MCF 10A (cell line): ENCODE measurements at regions of chr1 and their contacts with region 1.

Region 1: GRCh38 chr1:182855911-182856310 is 16.8 kb downstream of the DHX9 start:
- DNase-seq: no peak
- H3K4me3 Mint-ChIP-seq: no peak overlapping the region
- H3K27ac Mint-ChIP-seq: no peak overlapping the region
- H3K4me1 Mint-ChIP-seq: no peaks in the 10 kb centered on the region
- H3K27me3 Mint-ChIP-seq: no peaks in the 10 kb centered on the region
- CTCF ChIP-seq: no peak

Region 2: DNA sequence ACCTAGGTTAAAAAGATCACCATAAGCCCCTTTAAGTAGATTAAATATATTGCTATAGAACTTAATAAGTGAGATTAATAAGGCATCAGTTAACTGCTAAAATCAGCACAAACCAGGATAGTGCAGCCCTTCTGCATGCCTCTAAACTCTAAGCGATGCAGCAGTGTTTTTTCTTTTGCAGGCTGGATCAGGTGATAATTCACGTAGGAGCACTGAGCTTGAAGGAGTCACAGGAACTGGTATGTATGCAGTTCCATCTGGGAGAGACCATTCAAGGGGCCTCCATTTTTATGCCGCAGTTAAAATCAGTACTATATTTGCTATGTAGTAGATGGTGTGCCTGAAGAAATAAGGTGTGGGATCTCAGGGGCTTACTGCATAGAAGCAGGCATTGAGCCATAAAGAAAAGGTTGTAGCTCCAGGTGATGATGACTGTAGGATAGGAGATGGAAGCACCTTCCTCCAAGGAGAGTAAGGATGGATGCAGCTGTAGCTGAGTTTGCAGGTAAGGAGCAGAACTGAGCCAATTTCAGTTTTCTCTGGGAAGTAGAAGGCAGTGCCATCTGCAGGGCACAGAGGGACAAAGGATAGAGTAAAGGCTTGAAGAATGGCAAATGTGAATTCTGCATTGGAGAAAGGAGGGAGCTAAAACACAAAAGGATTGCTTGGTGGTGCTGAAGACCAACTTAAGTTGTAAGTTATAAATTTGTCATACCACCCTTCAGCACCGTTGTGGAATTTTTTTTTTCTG is 43.8 kb before region 1 on chr1:
- CTCF ChIA-PET with region 1: no interaction called
- POLR2A ChIA-PET with region 1: no interaction called
- intact Hi-C with region 1: no loop called
- DNase-seq: peak; percentile 19
- H3K4me3 Mint-ChIP-seq: no peak overlapping the region
- H3K27ac Mint-ChIP-seq: no peak overlapping the region
- H3K4me1 Mint-ChIP-seq: peaks cover 6% of the 10 kb centered on the region
- H3K27me3 Mint-ChIP-seq: no peaks in the 10 kb centered on the region
- CTCF ChIP-seq: no peak

Region 3: DNA sequence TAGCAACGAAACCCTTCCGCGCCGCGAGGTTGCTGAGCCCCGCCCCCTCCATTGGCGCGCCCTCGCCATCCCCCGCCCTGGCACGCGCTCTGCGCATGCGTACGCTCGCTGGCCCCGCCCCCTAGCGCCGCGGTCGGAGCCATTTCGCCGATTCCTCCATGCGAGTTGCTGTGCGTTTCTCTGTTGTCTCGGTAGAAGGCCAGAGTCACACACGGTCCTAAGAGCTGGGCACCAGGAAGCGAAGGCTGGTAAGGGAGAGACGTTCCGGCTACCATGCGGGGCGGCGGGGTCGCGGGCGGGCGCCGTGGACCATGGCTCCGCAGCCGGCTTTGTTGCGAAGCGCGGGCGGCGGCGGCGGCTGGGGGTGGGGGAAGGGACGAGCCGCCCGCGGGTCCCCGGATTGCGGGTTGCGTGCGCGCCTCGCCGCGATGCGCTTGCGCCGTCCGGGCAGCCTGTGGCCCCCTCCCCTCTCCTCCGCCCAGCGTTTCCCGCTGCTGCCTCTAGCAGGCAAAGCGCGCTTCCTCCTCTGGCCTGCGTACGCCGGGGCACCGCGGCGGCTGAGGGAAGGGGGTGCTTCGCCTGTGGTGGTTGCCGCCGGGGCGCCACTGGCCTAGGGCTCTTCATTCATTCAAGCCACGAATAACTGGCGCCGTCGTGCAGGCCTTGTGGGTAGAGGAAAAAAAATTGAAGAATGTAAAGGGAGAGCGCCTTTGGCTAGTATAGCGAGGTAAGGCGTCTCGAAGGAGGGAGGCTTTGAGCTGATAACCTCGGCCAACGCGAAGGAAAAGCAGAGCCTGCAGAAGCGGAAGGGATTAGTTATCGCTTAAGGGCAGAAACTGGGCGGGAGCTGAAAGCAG is 16.5 kb before region 1 on chr1 and contains the start of gene DHX9:
- CTCF ChIA-PET with region 1: interaction called, 4 read pairs
- POLR2A ChIA-PET with region 1: interaction called, 13 read pairs
- intact Hi-C with region 1: no loop called
- DNase-seq: peak; percentile 93
- H3K4me3 Mint-ChIP-seq: peak within 1 kb of the TSS; percentile 88
- H3K27ac Mint-ChIP-seq: peak within 1 kb of the TSS; percentile 80
- H3K4me1 Mint-ChIP-seq: peaks cover 32% of the 10 kb centered on the region
- H3K27me3 Mint-ChIP-seq: no peaks in the 10 kb centered on the region
- CTCF ChIP-seq: peak; percentile 17
- total RNA-seq, gene DHX9: 105 and 107 TPM in 2 replicates

Region 4: GRCh38 chr1:182875889-182876288 is 20.0 kb after region 1 on chr1:
- CTCF ChIA-PET with region 1: interaction called, 3 read pairs
- POLR2A ChIA-PET with region 1: interaction called, 10 read pairs
- intact Hi-C with region 1: no loop called
- DNase-seq: no peak
- H3K4me3 Mint-ChIP-seq: no peak overlapping the region
- H3K27ac Mint-ChIP-seq: no peak overlapping the region
- H3K4me1 Mint-ChIP-seq: no peaks in the 10 kb centered on the region
- H3K27me3 Mint-ChIP-seq: no peaks in the 10 kb centered on the region
- CTCF ChIP-seq: no peak

Region 5: DNA sequence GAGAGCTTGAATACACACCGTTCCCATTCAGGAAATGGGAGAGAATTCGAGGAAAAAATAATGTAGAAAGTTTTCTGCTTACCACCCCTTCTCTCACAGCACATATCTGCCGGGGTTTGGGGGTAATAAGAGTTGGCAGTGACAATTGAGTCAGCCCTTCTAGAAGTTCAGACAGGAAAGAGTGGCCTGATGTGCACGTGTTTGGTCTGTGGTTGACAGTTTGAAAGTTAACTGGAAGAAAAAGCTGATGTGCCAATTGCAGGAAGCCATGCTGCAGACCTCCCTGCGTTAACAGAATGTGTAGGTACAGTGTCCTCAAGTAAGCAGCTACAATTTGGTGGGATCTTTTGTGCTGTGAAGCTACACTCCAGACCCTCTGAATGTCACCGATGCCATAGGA is 34.1 kb after region 1 on chr1:
- CTCF ChIA-PET with region 1: interaction called, 3 read pairs
- POLR2A ChIA-PET with region 1: interaction called, 4 read pairs
- intact Hi-C with region 1: loop called (anchors 5 kb)
- DNase-seq: peak; percentile 16
- H3K4me3 Mint-ChIP-seq: no peak overlapping the region
- H3K27ac Mint-ChIP-seq: no peak overlapping the region
- H3K4me1 Mint-ChIP-seq: no peaks in the 10 kb centered on the region
- H3K27me3 Mint-ChIP-seq: no peaks in the 10 kb centered on the region
- CTCF ChIP-seq: no peak